ENCODE measurements at regions of chr5 and their contacts with region 1.

Region 1: GRCh38 chr5:59506285-59506877 is 387.1 kb downstream of the PDE4D start:
- DNase-seq: no peak
- H3K4me3 ChIP-seq: no peak overlapping the region
- H3K27ac ChIP-seq: no peak overlapping the region
- H3K4me1 ChIP-seq: no peaks in the 10 kb centered on the region
- H3K27me3 ChIP-seq: no peaks in the 10 kb centered on the region
- CTCF ChIP-seq: peak; percentile 82

Region 2: DNA sequence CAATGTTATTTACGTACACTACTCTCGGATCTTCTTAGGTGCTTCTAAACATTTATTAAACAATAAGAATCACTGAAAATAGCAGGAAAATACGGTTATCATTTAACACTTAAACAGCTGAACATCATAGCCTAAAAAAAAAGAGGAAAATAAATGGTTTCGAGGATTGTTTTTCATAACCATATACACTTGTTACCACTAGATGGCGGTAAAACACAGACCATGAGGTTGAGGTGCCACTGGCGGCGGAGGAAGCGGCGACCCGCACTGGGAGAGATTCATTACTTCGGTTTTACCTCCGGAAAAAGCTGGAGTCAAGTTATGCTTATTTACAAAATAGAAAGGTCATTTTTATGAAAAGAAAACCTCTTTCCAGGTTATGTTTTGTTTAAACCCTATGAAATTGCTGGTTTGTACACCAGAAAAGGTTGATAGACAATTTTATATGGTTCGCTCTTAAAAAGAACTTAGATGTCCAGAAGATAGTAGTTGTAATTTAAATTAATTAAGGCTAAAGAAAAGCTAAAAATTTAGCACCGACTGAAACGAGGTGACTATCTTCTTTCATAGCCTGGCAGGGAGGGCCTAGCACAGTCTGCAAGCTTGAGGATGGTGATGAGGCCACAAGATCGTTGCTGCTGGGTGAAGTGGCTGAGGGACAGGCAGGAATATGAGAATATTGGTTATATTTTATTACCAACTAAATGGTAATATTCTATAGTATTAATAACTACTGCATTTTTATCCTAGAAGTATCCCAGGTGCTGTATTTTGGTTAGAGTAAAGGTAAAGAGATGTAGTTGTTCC is 317.8 kb before region 1 on chr5:
- CTCF ChIA-PET with region 1: no interaction called
- POLR2A ChIA-PET with region 1: no interaction called
- intact Hi-C with region 1: loop called (anchors 5 kb)
- DNase-seq: peak in 1 of 2 experiments; percentile 35
- H3K4me3 ChIP-seq: no peak overlapping the region; the same call in 1 of the 2 replicates
- H3K27ac ChIP-seq: no peak overlapping the region
- H3K4me1 ChIP-seq: peaks cover 4% of the 10 kb centered on the region
- H3K27me3 ChIP-seq: no peaks in the 10 kb centered on the region
- CTCF ChIP-seq: peak; percentile 89

Region 3: GRCh38 chr5:59598547-59598874 is 92.1 kb after region 1 on chr5:
- CTCF ChIA-PET with region 1: no interaction called
- POLR2A ChIA-PET with region 1: no interaction called
- intact Hi-C with region 1: no loop called
- DNase-seq: peak in 1 of 2 experiments; percentile 11
- H3K4me3 ChIP-seq: no peak overlapping the region
- H3K27ac ChIP-seq: no peak overlapping the region
- H3K4me1 ChIP-seq: peaks cover 12% of the 10 kb centered on the region
- H3K27me3 ChIP-seq: no peaks in the 10 kb centered on the region
- CTCF ChIP-seq: no peak

Region 4: GRCh38 chr5:59660737-59661136 is 154.4 kb after region 1 on chr5:
- CTCF ChIA-PET with region 1: interaction called, 3 read pairs
- POLR2A ChIA-PET with region 1: no interaction called
- intact Hi-C with region 1: loop called (anchors 1 kb)
- DNase-seq: no peak
- H3K4me3 ChIP-seq: no peak overlapping the region
- H3K27ac ChIP-seq: no peak overlapping the region
- H3K4me1 ChIP-seq: peaks cover 8% of the 10 kb centered on the region
- H3K27me3 ChIP-seq: no peaks in the 10 kb centered on the region
- CTCF ChIP-seq: peak; percentile 52

Region 5: GRCh38 chr5:59673438-59674058 is 167.2 kb after region 1 on chr5:
- CTCF ChIA-PET with region 1: interaction called, 3 read pairs
- POLR2A ChIA-PET with region 1: no interaction called
- intact Hi-C with region 1: loop called (anchors 1 kb)
- DNase-seq: peak in 1 of 2 experiments; percentile 61
- H3K4me3 ChIP-seq: no peak overlapping the region
- H3K27ac ChIP-seq: no peak overlapping the region
- H3K4me1 ChIP-seq: 0 out of 2 replicates have a peak, but pooled peaks cover 6% of the 10 kb centered on the region
- H3K27me3 ChIP-seq: no peaks in the 10 kb centered on the region
- CTCF ChIP-seq: peak; percentile 94

Measured in PC-9 (cell line).